Activated naive CD4-positive, alpha-beta T cell treated with anti-CD3 and anti-CD28 coated beads for 36 hours (primary cell): ENCODE measurements at regions of chr10 and their contacts with region 1.

Region 1: GRCh38 chr10:23994479-23995046 is 214.4 kb upstream of the KIAA1217 start:
- DNase-seq: peak; percentile 63
- H3K4me3 Mint-ChIP-seq: no peak overlapping the region
- H3K27ac Mint-ChIP-seq: no peak overlapping the region
- H3K4me1 Mint-ChIP-seq: no peaks in the 10 kb centered on the region
- H3K27me3 Mint-ChIP-seq: peaks cover 5% of the 10 kb centered on the region

Region 2: GRCh38 chr10:23499372-23500132 is 495.0 kb before region 1 on chr10:
- CTCF ChIA-PET with region 1: no interaction called
- intact Hi-C with region 1: no loop called
- DNase-seq: no peak
- H3K4me3 Mint-ChIP-seq: no peak overlapping the region
- H3K27ac Mint-ChIP-seq: no peak overlapping the region
- H3K4me1 Mint-ChIP-seq: no peaks in the 10 kb centered on the region
- H3K27me3 Mint-ChIP-seq: peaks cover 3% of the 10 kb centered on the region

Region 3: DNA sequence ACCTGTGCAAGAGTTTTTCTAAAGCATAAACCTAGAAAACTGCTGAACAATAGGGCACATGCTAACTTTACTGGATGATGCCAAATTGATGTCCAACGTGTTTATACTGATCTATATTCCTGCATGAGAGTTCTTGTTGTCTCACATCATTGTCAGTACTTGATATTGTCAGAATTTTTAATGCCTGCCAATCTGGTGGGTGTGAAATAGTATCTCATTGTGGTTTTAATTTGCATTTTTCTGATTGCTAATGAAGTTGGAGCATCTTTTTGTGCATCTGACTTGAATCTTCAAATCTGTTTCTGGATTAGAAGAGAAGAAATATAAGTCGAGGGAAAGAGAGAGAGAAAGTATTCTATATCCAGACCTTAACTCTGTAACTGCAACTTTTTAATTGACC is 95.4 kb before region 1 on chr10:
- CTCF ChIA-PET with region 1: no interaction called
- intact Hi-C with region 1: no loop called
- DNase-seq: no peak
- H3K4me3 Mint-ChIP-seq: no peak overlapping the region
- H3K27ac Mint-ChIP-seq: no peak overlapping the region
- H3K4me1 Mint-ChIP-seq: no peaks in the 10 kb centered on the region
- H3K27me3 Mint-ChIP-seq: no peaks in the 10 kb centered on the region

Region 4: GRCh38 chr10:24318517-24318916 is 324.0 kb after region 1 on chr10:
- CTCF ChIA-PET with region 1: interaction called, 4 read pairs
- intact Hi-C with region 1: loop called (anchors 5 kb)
- DNase-seq: no peak
- H3K4me3 Mint-ChIP-seq: no peak overlapping the region
- H3K27ac Mint-ChIP-seq: no peak overlapping the region
- H3K4me1 Mint-ChIP-seq: no peaks in the 10 kb centered on the region
- H3K27me3 Mint-ChIP-seq: peaks cover 2% of the 10 kb centered on the region

Region 5: GRCh38 chr10:24503461-24504320 is 509.1 kb after region 1 on chr10:
- CTCF ChIA-PET with region 1: interaction called, 3 read pairs
- intact Hi-C with region 1: loop called (anchors 1 kb)
- DNase-seq: peak; percentile 58
- H3K4me3 Mint-ChIP-seq: no peak overlapping the region
- H3K27ac Mint-ChIP-seq: no peak overlapping the region
- H3K4me1 Mint-ChIP-seq: no peaks in the 10 kb centered on the region
- H3K27me3 Mint-ChIP-seq: peaks cover 14% of the 10 kb centered on the region

Region 6: DNA sequence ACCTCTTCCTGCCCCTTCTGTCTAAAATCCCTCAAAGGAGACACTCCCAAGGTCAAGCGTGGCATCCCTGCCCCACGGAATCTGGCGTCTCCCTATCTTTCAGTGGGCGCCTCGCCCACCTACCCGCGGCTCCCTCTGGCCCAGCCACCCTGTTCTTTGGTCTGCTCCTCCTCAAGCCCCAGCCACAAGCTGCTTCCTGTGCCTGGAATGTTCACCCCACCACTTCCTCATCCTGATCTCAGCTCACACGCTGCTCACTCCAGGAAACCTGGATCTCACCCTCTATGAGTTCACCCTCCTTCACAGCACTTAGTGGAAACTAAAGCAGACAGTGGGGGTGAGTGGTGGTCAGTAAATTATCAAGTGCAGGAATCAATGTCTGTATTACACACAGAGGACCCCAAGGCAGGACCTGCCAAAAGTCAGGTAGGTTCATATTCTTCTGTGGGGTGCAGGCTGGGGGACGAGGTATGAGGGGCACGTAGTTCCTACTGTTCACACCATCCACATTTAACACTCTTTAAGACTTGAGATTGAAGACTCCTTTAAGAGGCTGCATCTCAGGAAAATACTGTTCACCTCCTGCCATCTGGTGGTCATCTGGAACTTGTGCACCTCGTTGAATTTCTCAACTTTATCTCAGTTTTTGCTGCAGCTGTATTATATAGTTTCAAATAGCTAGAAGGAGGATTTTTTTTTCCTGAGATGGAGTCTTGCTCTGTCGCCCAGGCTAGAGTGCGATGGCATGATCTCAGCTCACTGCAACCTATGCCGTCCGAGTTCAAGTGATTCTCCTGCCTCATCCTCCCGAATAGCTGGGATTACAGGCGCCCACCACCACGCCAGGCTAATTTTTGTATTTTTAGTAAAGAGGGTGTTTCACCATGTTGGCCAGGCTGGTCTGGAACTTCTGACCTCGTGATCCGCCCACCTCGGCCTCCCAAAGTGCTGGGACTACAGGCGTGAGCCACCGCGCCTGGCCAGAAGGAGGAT is 562.5 kb after region 1 on chr10:
- CTCF ChIA-PET with region 1: no interaction called
- intact Hi-C with region 1: loop called (anchors 2 kb)
- DNase-seq: peak; percentile 41
- H3K4me3 Mint-ChIP-seq: no peak overlapping the region
- H3K27ac Mint-ChIP-seq: no peak overlapping the region
- H3K4me1 Mint-ChIP-seq: peaks cover 6% of the 10 kb centered on the region
- H3K27me3 Mint-ChIP-seq: no peaks in the 10 kb centered on the region